Heart right ventricle (tissue), 16 donors: ENCODE measurements at regions of chr16 and their contacts with region 1.

Region 1: GRCh38 chr16:58000706-58001676 is at the start of gene USB1:
- DNase-seq: peak; percentile 86 to 92
- ATAC-seq: peak; percentile 92 to 98 (median 95)
- H3K4me3 ChIP-seq: peak within 1 kb of the TSS; percentile 57 to 97 (median 72)
- H3K27ac ChIP-seq: peak within 1 kb of the TSS; percentile 86 to 97 (median 92)
- H3K4me1 ChIP-seq: peaks cover 6 to 53% (median 33%) of the 10 kb centered on the region in 9 donors
- H3K27me3 ChIP-seq: no peaks in the 10 kb centered on the region
- CTCF ChIP-seq: peak; percentile 58 to 91 (median 80)
- total RNA-seq, gene USB1: 21.1 to 39.2 (median 31.5) TPM

Region 2: GRCh38 chr16:57591086-57591869 is 409.7 kb before region 1 on chr16:
- intact Hi-C with region 1: loop called in 2 of 10 experiments (anchors 10 kb)
- DNase-seq: peak; percentile 65 to 74
- ATAC-seq: peak; percentile 86 to 95 (median 92)
- H3K4me3 ChIP-seq: no peak overlapping the region
- H3K27ac ChIP-seq: peak overlapping the region in 1 of 10 donors; percentile 53
- H3K4me1 ChIP-seq: peaks cover 0 to 33% (median 4%) of the 10 kb centered on the region in 9 donors
- H3K27me3 ChIP-seq: peaks cover 0 to 4% (median 0%) of the 10 kb centered on the region in 7 donors
- CTCF ChIP-seq: peak; percentile 80 to 95 (median 91)

Region 3: GRCh38 chr16:57757326-57757786 is 243.6 kb before region 1 on chr16:
- intact Hi-C with region 1: loop called in 8 of 10 experiments (anchors 2 to 10 kb)
- DNase-seq: peak; percentile 90 to 93
- ATAC-seq: peak; percentile 81 to 93 (median 90)
- H3K4me3 ChIP-seq: no peak overlapping the region
- H3K27ac ChIP-seq: peak overlapping the region in 8 of 10 donors; percentile 54 to 80 (median 67)
- H3K4me1 ChIP-seq: peaks cover 0 to 35% (median 17%) of the 10 kb centered on the region in 9 donors
- H3K27me3 ChIP-seq: no peaks in the 10 kb centered on the region
- CTCF ChIP-seq: peak; percentile 96 to 100 (median 99)

Region 4: DNA sequence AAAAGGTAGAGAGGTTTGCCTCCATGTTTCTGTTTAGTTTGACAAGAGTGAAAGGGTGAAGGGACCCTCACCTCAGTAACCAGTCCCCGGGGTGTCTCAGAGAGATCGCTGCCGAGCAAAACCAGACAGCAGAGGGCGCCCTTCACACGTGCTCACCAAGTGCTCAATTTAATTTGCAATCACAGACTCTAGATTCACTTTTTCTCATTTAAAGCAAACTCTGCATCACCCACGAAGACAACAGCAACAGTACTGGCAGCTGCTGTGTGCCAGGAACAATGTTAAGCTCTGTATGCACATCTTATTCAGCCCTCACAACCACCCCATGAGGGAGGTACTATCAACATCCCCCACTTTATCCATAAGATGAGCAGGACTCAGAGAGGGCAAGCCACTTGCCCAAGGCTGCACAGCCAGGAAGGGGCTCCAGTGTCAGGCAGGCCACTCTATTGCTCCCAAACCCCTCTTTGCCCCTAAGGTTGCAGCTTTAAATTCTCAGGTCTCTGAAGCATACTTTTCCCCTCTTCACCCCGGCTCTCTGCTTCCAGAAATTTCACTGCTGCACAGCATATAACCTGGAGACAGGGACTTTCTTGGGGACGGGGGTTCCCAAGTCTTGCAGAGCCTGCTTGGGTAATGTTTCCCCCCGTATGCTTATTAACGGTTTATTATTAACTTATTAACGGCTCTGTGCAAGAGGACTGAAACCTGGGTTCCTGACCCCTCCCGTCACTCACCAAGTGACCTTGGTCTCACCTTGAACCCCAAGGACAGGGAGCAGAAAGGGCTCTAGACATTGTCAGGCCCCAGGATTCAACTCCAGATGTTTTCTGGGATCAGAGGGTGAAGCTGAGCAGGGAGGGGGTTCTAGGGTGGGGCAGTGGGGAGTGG is 101.0 kb before region 1 on chr16:
- intact Hi-C with region 1: loop called in 9 of 10 experiments (anchors 1 to 5 kb)
- DNase-seq: peak; percentile 64 to 78
- ATAC-seq: peak; percentile 61 to 87 (median 76)
- H3K4me3 ChIP-seq: no peak overlapping the region
- H3K27ac ChIP-seq: no peak overlapping the region
- H3K4me1 ChIP-seq: peaks cover 0 to 12% (median 0%) of the 10 kb centered on the region in 9 donors
- H3K27me3 ChIP-seq: peaks cover 0 to 44% (median 22%) of the 10 kb centered on the region in 7 donors
- CTCF ChIP-seq: peak; percentile 61 to 95 (median 93)